ENCODE measurements at regions of chr1 and their contacts with region 1.

Region 1: GRCh38 chr1:200888349-200888838 is 6.3 kb upstream of the INAVA start:
- DNase-seq: peak; percentile 84
- ATAC-seq: peak; percentile 92
- H3K4me3 Mint-ChIP-seq: peak overlapping the region; percentile 63
- H3K27ac Mint-ChIP-seq: peak overlapping the region; percentile 47
- H3K4me1 Mint-ChIP-seq: peaks cover 70% of the 10 kb centered on the region
- H3K27me3 Mint-ChIP-seq: peaks cover 27% of the 10 kb centered on the region

Region 2: GRCh38 chr1:200877839-200878551 is 10.4 kb before region 1 on chr1:
- CTCF ChIA-PET with region 1: interaction called, 20 read pairs
- POLR2A ChIA-PET with region 1: no interaction called
- DNase-seq: peak; percentile 52
- ATAC-seq: peak; percentile 79
- H3K4me3 Mint-ChIP-seq: no peak overlapping the region
- H3K27ac Mint-ChIP-seq: no peak overlapping the region
- H3K4me1 Mint-ChIP-seq: peaks cover 32% of the 10 kb centered on the region
- H3K27me3 Mint-ChIP-seq: peaks cover 43% of the 10 kb centered on the region

Region 3: DNA sequence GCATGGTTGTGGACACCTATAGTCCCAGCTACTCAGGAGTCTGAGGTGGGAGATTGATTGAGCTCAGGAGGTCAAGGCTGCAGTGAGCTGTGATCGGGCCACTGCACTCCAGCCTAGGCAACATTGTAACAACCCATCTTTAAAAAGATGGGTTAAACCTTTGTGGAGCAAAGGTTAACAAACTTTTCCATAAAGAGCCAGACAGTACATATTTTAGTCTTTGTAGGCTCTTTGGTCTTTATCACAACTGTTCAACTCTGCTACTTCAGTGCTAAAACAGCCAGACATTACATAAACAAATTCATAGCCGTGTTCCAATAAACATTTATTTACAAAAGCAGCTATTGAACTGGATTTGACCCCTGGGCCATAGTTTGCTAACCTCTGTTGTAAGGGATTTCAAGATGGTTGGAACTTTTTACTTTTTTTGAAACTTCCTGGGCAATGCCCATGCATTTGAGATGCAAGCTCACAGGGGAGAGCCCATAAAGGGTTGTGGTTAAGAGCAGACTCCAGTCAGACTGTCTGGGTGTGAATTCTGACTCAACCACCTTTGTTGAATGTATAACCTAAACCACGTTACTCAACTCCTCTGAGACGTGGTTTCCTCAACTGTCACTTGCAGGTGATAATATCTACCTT is 17.1 kb after region 1 on chr1:
- CTCF ChIA-PET with region 1: interaction called, 3 read pairs
- POLR2A ChIA-PET with region 1: interaction called, 11 read pairs
- DNase-seq: peak; percentile 67
- ATAC-seq: peak; percentile 96
- H3K4me3 Mint-ChIP-seq: no peak overlapping the region
- H3K27ac Mint-ChIP-seq: no peak overlapping the region
- H3K4me1 Mint-ChIP-seq: peaks cover 23% of the 10 kb centered on the region
- H3K27me3 Mint-ChIP-seq: peaks cover 30% of the 10 kb centered on the region

Region 4: GRCh38 chr1:200917291-200917817 is 29.0 kb after region 1 on chr1:
- CTCF ChIA-PET with region 1: no interaction called
- POLR2A ChIA-PET with region 1: no interaction called
- DNase-seq: no peak
- ATAC-seq: no peak
- H3K4me3 Mint-ChIP-seq: no peak overlapping the region
- H3K27ac Mint-ChIP-seq: no peak overlapping the region
- H3K4me1 Mint-ChIP-seq: no peaks in the 10 kb centered on the region
- H3K27me3 Mint-ChIP-seq: peaks cover 17% of the 10 kb centered on the region

Measured in activated CD8-positive, alpha-beta T cell treated with anti-CD3 and anti-CD28 coated beads, Interleukin-2, amount 10 ng/mL, durations not matched to agents 7 days and 5 days (primary cell).